IMR-90 (cell line): ENCODE measurements at regions of chr2 and their contacts with region 1.

Region 1: GRCh38 chr2:30541680-30542079 is 94.6 kb downstream of the LCLAT1 start:
- DNase-seq: no peak
- ATAC-seq: no peak
- H3K4me3 ChIP-seq: no peak overlapping the region
- H3K27ac ChIP-seq: no peak overlapping the region
- H3K4me1 ChIP-seq: peaks cover 5% of the 10 kb centered on the region
- H3K27me3 ChIP-seq: no peaks in the 10 kb centered on the region
- CTCF ChIP-seq: no peak
- POLR2A ChIP-seq: no peak
- RAD21 ChIP-seq: no peak

Region 2: DNA sequence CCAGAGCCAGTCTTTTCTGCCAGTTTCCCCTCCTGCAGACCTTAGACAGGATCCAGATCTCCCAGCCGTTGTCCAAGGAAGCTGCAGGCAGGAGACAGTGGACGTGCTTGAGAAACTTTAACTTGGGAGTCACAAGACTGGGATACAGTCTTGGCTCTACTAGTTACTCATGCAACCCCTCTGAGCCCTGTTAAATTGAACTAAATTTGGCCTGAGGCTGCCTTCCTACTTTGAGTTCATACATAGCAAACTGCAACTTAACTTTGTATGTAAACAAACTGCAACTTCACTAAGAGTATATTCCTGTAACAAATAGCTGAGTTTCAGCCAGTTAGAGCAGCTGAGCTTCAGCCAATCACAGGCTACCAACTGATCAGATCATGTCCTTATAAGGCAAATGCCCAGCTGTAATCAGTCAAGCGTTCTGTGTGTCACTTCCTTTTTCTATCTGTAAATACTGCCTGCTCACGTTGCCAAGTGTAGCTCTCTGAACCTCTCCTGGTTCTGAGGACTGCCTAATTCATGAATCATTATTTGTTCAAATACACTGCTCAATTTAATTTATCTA is 124.7 kb after region 1 on chr2:
- CTCF ChIA-PET with region 1: no interaction called
- POLR2A ChIA-PET with region 1: interaction called, 12 read pairs
- dilution Hi-C with region 1: no loop called
- in situ Hi-C with region 1: no loop called
- intact Hi-C with region 1: no loop called
- DNase-seq: peak; percentile 99
- ATAC-seq: peak; percentile 73
- H3K4me3 ChIP-seq: no peak overlapping the region
- H3K27ac ChIP-seq: peak overlapping the region; percentile 99
- H3K4me1 ChIP-seq: peaks cover 26% of the 10 kb centered on the region
- H3K27me3 ChIP-seq: no peaks in the 10 kb centered on the region
- CTCF ChIP-seq: no peak
- POLR2A ChIP-seq: no peak; the same call in 1 of the 2 replicates
- RAD21 ChIP-seq: no peak